GM18951 (cell line): ENCODE measurements at regions of chr4 and their contacts with region 1.

Region 1: DNA sequence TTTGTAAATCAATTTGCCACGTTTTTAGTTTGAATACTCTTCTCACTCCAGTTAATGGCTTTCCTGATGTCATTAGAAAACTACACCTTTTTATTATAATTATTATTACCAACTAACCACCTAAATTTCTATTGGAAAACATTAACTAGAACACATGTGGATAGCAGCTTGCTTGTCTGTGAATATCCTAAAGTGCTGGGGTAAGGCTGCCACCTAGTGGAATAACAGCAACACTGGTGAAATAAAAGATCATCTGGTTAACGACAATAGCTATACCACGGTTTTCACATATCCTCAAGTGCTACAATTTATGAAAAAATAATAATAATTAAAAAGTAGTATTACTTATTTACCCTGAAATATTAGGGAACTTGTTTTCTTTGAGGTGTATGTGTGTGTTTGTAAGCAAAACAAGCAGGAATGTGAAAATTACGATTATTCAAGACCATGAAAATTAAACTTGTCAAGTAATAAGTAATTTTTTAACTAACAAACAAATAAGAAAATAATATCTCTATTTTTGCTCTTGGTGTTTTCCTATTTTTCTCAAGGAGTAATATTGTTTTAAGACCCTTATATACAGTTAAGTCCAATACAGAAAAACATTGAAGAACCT is 130.1 kb upstream of the TECRL start:
- POLR2A ChIP-seq: no peak

Region 2: GRCh38 chr4:64158648-64159326 is 380.6 kb before region 1 on chr4:
- in situ Hi-C with region 1: loop called (anchors 10 kb)
- POLR2A ChIP-seq: no peak